ENCODE measurements at regions of chr2 and their contacts with region 1.

Region 1: GRCh38 chr2:215573496-215573895 is 137.6 kb upstream of the FN1 start:
- DNase-seq: no peak
- ATAC-seq: no peak
- H3K4me3 ChIP-seq: no peak overlapping the region
- H3K27ac ChIP-seq: no peak overlapping the region
- H3K4me1 ChIP-seq: peaks cover 10% of the 10 kb centered on the region; the same call in 1 of the 2 replicates
- H3K27me3 ChIP-seq: no peaks in the 10 kb centered on the region
- CTCF ChIP-seq: no peak

Region 2: GRCh38 chr2:215311625-215312396 is 261.7 kb before region 1 on chr2 and contains the start of gene ATIC:
- CTCF ChIA-PET with region 1: no interaction called
- POLR2A ChIA-PET with region 1: interaction called, 14 read pairs
- intact Hi-C with region 1: no loop called
- DNase-seq: peak; percentile 95
- ATAC-seq: peak; percentile 98
- H3K4me3 ChIP-seq: peak within 1 kb of the TSS; percentile 96
- H3K27ac ChIP-seq: peak within 1 kb of the TSS; percentile 72
- H3K4me1 ChIP-seq: peaks cover 49% of the 10 kb centered on the region
- H3K27me3 ChIP-seq: no peaks in the 10 kb centered on the region
- CTCF ChIP-seq: no peak
- total RNA-seq, gene ATIC: 41.7 and 78.8 TPM in 2 replicates

Region 3: GRCh38 chr2:215760557-215760956 is 187.1 kb after region 1 on chr2:
- CTCF ChIA-PET with region 1: interaction called, 3 read pairs
- POLR2A ChIA-PET with region 1: interaction called, 16 read pairs
- intact Hi-C with region 1: no loop called
- DNase-seq: peak; percentile 9
- ATAC-seq: no peak
- H3K4me3 ChIP-seq: no peak overlapping the region
- H3K27ac ChIP-seq: no peak overlapping the region
- H3K4me1 ChIP-seq: peaks cover 12% of the 10 kb centered on the region; the same call in 1 of the 2 replicates
- H3K27me3 ChIP-seq: no peaks in the 10 kb centered on the region
- CTCF ChIP-seq: no peak

Measured in PC-3 (cell line).